ENCODE measurements at regions of chr22 and their contacts with region 1.

Region 1: GRCh38 chr22:20174785-20175596 is 24.1 kb upstream of the CCDC188 start:
- DNase-seq: no peak
- ATAC-seq: peak in 5 of 8 donors; percentile 24 to 60 (median 58)
- H3K4me3 ChIP-seq: no peak overlapping the region
- H3K27ac ChIP-seq: no peak overlapping the region
- H3K4me1 ChIP-seq: no peaks in the 10 kb centered on the region
- H3K27me3 ChIP-seq: no peaks in the 10 kb centered on the region
- CTCF ChIP-seq: peak in 6 of 9 donors; percentile 23 to 43 (median 31)

Region 2: DNA sequence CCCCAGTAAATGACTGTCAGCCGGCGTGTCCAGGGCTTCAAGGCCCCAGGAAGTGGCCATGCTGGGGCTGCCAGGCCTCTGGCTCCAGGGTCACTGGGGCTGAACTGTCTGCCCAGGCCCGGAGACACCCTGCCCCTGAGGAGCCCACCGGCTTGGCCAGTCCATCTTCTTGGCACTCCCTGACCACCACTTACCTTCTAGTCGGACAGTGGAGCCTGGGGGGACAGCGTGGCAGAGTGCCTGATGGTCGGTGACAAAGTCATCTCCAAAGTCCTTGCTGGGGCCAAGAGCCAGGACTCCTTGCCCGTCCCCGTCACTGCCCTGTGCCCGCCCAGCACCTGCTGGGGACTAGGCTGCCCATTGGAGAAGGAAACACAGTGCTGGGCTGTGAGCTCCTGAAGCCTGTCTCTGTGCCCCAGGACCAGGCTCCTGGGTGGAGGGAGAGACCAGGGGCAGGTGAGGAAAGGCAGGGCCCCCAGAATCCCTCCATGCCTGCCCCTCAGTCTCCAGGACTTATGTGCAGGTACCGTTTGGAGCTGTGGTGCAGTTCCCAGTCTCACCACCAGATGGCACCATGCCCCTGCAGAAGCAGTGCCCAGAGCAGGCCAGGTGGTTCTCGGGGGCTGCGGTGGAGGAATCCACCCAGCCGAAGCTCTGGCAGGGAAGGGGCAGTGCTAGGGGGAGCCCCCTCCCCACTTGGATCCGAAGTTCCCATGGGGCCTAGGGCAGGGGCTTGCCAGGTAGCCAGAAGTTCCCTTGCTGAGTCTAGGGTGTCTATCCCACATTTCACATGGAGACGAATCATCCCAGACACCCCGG is 18.2 kb before region 1 on chr22:
- intact Hi-C with region 1: no loop called
- DNase-seq: peak; percentile 83 to 88
- ATAC-seq: peak; percentile 68 to 85 (median 76)
- H3K4me3 ChIP-seq: no peak overlapping the region
- H3K27ac ChIP-seq: no peak overlapping the region
- H3K4me1 ChIP-seq: peaks cover 0 to 7% (median 4%) of the 10 kb centered on the region in 9 donors
- H3K27me3 ChIP-seq: peaks cover 0 to 7% (median 0%) of the 10 kb centered on the region in 7 donors
- CTCF ChIP-seq: peak in 8 of 9 donors; percentile 97 to 100 (median 98)

Region 3: GRCh38 chr22:20238536-20238900 is 63.5 kb after region 1 on chr22:
- intact Hi-C with region 1: loop called in 1 of 10 experiments (anchors 5 kb)
- DNase-seq: peak; percentile 53 to 63
- ATAC-seq: peak; percentile 24 to 64 (median 58)
- H3K4me3 ChIP-seq: peak overlapping the region in 3 of 10 donors; percentile 30 to 33 (median 33)
- H3K27ac ChIP-seq: peak overlapping the region; percentile 35 to 91 (median 80)
- H3K4me1 ChIP-seq: peaks cover 33 to 56% (median 43%) of the 10 kb centered on the region in 9 donors
- H3K27me3 ChIP-seq: no peaks in the 10 kb centered on the region
- CTCF ChIP-seq: peak in 8 of 9 donors; percentile 53 to 67 (median 56)

Region 4: DNA sequence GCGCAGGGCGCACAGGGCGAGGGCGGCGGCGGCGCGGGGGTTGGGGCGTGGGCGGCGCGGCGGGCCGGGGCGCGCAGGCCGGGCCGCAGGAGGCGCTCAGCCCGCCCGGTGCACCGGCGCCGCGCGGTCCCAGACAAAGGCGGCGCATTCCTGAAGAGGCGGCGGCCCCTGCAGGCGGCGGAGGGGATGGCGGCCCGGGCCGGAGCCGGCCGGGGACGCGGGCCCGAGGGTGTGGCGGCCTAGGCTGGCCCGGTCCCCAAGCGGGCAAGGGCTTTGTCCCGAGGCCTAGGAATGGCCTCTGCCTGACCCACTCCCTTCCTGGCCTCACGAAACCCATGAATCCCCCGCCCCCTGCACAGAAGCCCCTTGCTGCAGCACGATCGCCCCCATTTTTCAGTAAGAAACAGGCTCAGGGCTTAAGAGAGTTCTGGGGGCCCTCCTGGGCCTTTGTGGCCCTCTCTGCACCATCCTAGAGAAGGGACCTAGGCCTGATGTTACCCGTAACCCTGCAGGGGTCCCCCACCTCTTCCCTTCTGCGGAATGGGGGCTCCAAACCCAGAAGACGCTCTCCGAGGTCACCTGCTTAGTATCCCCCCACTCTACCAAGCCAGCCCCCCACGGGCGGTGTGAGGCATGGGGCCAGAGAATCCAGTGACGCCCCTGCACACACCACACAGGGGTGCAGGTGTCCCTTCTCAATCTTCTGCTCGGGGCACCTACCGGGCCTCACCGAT is 93.5 kb after region 1 on chr22 and contains the start of gene RTN4R:
- intact Hi-C with region 1: loop called in 1 of 10 experiments (anchors 5 kb)
- DNase-seq: peak; percentile 51 to 71
- ATAC-seq: peak; percentile 74 to 92 (median 86)
- H3K4me3 ChIP-seq: peak within 1 kb of the TSS; percentile 38 to 71 (median 50)
- H3K27ac ChIP-seq: peak within 1 kb of the TSS in 6 of 10 donors; percentile 23 to 60 (median 32)
- H3K4me1 ChIP-seq: peaks cover 6 to 17% (median 9%) of the 10 kb centered on the region in 9 donors
- H3K27me3 ChIP-seq: peaks cover 0 to 10% (median 0%) of the 10 kb centered on the region in 7 donors
- CTCF ChIP-seq: peak; percentile 56 to 84 (median 71)
- total RNA-seq, gene RTN4R: 0.56 to 2.5 (median 0.93) TPM